Head of caudate nucleus (tissue), 42 donors: ENCODE measurements at regions of chr20 and their contacts with region 1.

Region 1: DNA sequence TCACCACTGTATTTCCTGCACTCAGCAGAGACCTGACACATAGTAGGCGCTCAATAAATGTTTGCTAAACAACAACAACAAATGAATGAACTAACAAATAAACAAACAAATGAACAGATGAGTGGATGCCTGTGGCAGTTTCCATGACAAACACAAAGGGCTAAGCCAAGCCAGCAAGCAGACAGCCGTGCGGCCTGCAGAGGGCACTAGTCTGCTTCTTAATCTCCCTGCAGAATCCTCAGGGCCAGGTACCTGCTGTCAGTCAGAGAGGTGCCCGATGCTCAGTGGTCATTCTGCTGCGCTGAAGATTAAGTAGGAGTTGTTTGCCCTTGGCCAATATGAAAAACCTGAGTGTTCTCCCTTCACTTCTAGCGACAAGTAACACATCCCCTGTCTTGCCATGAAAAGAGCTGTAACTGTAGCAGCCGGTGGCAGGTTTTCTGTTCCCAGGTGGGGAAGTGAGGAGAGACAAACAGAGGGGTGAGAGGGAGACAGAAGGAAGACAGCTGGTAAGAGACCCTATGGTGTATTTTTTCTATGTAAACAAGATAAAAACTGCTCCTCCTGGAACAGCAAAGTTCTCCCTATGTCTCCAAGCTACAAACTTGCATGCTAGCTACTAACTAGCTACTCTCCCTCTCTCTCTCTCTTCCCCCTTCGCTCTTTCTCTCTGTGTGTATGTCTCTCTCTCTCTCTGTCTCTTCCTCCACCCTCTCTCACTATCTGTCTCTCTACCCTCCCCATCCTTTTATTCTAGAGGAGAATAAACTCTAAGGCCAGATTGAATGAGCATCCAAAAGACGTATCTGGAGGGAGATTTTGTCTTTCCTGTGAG is at the start of gene MC3R:
- DNase-seq: peak; percentile 35 to 84 (median 67)

Region 2: GRCh38 chr20:56187534-56188198 is 60.5 kb before region 1 on chr20:
- intact Hi-C with region 1: no loop called
- DNase-seq: peak in 41 of 42 donors; percentile 8 to 70 (median 43)

Region 3: GRCh38 chr20:56343861-56344381 is 95.8 kb after region 1 on chr20:
- intact Hi-C with region 1: loop called (anchors 5 kb)
- DNase-seq: peak in 41 of 42 donors; percentile 43 to 87 (median 70)